AG04449 (cell line): ENCODE measurements at regions of chr15 and their contacts with region 1.

Region 1: DNA sequence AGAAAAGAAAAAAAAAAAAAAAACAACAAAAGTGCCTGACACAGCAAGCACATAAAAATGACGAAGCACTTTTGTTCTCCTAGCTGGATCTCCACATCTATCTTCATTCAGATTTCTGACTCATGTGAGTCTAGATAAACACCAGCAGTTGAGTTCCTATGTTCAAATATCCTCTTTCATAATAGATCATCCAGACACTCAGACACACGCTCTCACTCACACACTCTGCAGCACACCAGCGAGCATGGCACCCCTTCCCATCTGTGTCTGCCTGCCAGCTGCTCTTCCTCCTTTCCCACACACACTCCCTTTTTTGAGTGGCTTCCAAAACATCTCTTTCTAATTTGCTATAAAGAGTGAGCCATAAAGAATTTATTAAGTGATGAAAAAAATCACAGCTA is 19.8 kb upstream of the CELF6 start:
- DNase-seq: peak; percentile 77
- H3K4me3 ChIP-seq: no peak overlapping the region
- CTCF ChIP-seq: no peak

Region 2: DNA sequence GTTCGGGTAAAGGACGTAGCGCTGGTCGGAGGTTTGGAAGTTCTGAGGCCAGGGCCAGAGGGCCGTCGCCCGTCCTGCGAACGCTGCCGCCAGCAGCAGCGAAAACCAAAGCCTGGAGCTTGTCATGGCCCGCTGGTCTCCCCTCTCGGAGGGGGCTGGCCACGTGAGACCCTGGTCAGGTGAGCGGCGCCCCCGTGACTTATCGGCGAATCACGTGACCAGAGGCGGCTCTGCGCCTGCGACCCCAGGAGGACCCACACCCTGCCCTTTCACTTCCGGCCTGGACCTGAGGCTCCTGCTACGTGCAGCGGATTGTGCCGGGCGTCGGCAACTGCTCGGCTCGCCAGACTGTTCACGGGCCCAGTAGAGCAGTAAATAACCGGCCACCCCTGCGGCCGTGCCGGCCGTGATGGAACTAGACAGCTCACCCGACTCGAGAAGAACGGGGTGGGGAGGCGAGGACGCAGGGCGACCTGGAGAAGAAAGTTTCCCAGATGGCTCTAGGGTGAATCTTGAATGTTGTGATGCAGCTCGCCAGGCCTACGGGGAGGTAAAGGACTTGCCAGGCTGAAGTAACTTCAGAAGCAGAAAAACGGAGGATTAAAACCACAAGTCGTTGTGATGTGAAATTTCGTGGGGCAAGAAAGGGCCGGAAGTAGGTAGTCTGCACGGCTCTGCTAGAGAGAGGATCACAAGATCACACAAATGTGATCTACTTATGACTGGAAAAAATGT is 36.2 kb after region 1 on chr15 and contains the start of gene HEXA:
- CTCF ChIA-PET with region 1: no interaction called
- POLR2A ChIA-PET with region 1: interaction called, 10 read pairs
- DNase-seq: peak; percentile 78
- H3K4me3 ChIP-seq: peak within 1 kb of the TSS; percentile 95
- CTCF ChIP-seq: no peak

Region 3: DNA sequence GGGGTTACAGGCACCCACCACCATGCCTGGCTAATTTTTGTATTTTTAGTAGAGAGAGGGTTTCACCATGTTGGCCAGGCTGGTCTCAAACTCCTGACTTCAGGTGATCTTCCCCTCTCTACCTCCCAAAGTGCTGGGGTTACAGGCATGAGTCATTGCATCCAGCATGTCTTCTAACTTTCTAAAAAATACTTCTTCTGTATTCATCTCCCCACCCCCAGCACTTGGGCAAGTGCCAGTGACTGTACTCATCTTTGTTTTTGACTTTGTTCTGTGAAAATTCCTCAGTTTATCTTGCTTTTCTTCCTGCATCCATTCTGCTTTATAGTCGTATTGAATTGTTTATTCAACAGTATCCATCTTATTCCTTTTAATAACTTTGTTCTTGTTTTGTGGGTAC is 181.9 kb after region 1 on chr15:
- CTCF ChIA-PET with region 1: no interaction called
- POLR2A ChIA-PET with region 1: no interaction called
- DNase-seq: no peak
- H3K4me3 ChIP-seq: no peak overlapping the region
- CTCF ChIP-seq: no peak